ENCODE measurements at regions of chr1 and their contacts with region 1.

Region 1: GRCh38 chr1:38152351-38153065 is 105.9 kb upstream of the POU3F1 start:
- DNase-seq: no peak
- H3K4me3 ChIP-seq: no peak overlapping the region
- H3K27ac ChIP-seq: no peak overlapping the region
- H3K4me1 ChIP-seq: peaks cover 0 to 6% of the 10 kb centered on the region in 2 experiments; a peak in 1 of 4 replicates
- H3K27me3 ChIP-seq: no peaks in the 10 kb centered on the region; the same call in 1 of the 2 replicates
- CTCF ChIP-seq: no peak
- EP300 ChIP-seq: peak in 1 of 2 experiments; percentile 62; a peak in 1 of 4 replicates
- RAD21 ChIP-seq: no peak

Region 2: DNA sequence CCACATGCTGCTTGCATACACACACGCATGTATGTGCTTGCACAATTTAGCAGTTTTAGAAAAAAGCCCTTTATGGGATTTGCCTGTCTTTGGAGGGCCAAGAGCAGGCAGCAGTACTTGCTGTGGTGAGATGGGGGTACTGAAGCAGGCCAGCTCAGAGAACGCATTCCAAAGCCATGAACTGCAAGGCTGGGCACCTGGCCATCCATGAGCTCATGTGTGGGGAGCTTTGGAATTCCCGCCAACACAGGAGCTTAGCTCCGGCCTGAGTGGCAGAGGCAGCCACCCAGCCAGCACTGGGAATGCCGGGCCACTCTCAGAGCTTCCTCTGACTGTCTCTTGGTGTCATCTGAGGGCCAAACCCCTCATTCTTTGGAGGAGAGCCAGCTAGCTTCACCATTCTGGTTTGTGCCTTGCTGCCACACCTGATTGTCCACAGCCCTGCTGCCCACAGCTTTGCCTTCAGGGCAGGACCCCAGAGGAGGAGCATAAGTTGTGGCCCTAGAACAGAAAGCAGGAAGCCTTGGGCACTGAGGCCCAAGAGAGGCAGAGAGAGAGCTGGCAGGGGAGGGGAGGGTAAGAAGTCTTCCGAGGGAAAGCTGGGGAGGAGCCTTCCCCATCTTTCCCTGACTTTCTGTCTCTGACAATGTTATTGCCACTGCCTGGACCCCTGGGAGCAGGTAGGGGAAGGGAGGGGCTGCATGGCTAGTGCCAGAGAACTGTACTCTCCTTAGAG is 13.8 kb before region 1 on chr1:
- CTCF ChIA-PET with region 1: interaction called, 12 read pairs
- POLR2A ChIA-PET with region 1: no interaction called
- DNase-seq: no peak
- H3K4me3 ChIP-seq: no peak overlapping the region
- H3K27ac ChIP-seq: peak overlapping the region in 1 of 2 experiments; percentile 37; a peak in 1 of 4 replicates
- H3K4me1 ChIP-seq: peaks cover 0 to 19% of the 10 kb centered on the region in 2 experiments; a peak in 1 of 4 replicates
- H3K27me3 ChIP-seq: peaks cover 20% of the 10 kb centered on the region
- CTCF ChIP-seq: peak; percentile 29; the same call in 1 of the 2 replicates
- EP300 ChIP-seq: peak in 1 of 2 experiments; percentile 66; a peak in 1 of 4 replicates
- RAD21 ChIP-seq: no peak

Region 3: DNA sequence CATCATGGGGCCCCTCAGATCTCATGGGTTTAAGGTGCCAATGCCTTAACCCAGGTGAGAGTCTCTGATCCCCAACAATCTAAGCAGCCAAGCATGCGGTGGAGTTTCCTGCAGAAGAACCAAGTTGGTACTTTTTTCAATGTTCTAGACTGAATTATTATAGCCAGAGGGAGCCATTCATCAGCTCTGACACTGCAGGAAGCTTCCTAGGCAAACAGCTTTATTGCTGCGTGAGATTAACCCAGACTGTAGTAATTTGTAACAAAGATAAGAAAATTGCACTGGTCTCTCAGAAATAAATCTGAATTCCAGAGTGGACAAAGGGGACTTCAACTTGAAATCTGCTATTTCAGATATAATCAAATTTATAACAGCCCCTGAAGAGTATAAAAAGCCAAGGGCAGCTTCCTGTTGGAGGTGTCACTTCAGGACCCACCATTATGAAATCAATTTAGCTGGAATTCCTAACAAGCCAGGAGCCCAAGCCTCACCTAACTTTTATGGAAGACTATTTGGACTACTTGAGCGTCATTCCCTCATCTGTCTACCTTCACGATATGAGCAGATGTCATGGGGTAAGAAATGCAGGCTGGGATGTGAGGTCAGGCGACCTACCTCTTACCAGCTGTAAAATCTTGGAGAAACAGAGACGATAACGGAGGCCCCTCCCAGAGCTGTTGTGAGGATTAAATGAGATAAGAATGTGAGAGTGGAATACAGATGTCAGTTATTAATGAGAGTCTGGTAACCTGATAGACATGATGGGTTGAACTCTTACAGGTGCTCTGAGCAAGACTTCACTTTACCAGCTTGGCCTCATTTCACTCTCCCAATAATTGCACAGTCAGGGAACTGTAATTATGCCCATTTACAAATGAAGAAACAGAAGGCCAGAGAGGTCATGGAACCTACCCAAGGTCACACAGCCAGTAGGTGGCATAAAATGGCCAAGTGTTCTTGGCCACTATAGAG is 571.9 kb after region 1 on chr1:
- CTCF ChIA-PET with region 1: no interaction called
- POLR2A ChIA-PET with region 1: no interaction called
- DNase-seq: no peak
- H3K4me3 ChIP-seq: no peak overlapping the region
- H3K27ac ChIP-seq: no peak overlapping the region
- H3K4me1 ChIP-seq: peaks cover 0 to 13% of the 10 kb centered on the region in 2 experiments; a peak in 1 of 4 replicates
- H3K27me3 ChIP-seq: peaks cover 9% of the 10 kb centered on the region; the same call in 1 of the 2 replicates
- CTCF ChIP-seq: no peak
- EP300 ChIP-seq: no peak
- RAD21 ChIP-seq: no peak